ENCODE measurements at regions of chr20 and their contacts with region 1.

Region 1: GRCh38 chr20:44217342-44218092 is 6.9 kb upstream of the OSER1 start:
- DNase-seq: peak; percentile 65
- ATAC-seq: peak; percentile 82
- H3K4me3 ChIP-seq: no peak overlapping the region
- H3K27ac ChIP-seq: no peak overlapping the region
- H3K4me1 ChIP-seq: no peaks in the 10 kb centered on the region; a peak in 1 of 4 replicates
- H3K27me3 ChIP-seq: no peaks in the 10 kb centered on the region
- CTCF ChIP-seq: peak; percentile 93 to 99 (median 96)
- POLR2A ChIP-seq: no peak
- RAD21 ChIP-seq: peak; percentile 94

Region 2: DNA sequence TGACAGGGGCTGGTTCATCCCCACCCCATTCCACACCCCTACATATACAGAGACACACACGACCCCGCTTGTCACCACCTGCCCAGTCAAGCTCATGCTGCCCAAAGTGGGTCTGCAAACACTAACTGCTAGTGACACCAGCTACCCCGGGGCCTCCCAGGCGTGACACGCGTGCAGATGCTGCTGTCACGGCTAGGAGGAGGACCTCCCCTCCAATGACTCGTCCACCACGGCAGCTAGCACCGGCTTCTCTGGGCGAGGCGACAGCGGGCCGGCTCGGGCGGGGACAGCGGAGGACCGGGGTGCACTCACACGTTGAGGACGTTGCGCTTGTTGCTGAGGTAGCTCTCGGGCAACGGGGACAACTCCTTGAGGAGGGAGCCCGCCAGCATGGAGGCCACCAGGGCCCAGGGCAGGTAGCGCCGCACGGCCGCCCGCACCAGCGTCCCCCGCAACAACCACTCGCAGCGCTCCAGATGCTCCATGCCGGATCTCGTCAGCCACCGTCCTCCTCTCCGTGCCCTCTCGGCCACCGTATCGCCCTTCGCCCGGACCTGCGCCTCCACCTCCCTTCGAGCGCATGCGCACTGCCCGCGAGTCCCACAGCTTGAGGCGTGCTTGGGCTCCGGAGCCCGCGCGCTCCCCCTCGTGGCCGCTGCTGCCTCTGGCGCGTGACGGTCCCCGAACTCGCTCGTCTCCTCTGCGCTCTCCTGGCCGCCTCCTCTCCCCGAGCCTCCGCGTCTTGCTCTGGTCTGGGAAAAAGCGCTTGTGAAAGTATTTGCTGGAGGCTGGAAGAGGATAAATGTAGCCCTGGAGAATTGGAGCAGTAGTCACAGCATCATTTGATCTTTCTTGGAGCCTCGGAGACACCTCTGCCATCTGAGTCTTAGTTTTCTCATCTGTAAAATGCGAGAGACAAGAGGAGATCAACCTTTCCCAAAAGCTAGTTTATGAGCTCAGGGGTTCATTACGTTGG is 93.4 kb after region 1 on chr20 and contains the start of gene FITM2:
- CTCF ChIA-PET with region 1: interaction called, 61 read pairs
- POLR2A ChIA-PET with region 1: no interaction called
- RAD21 ChIA-PET with region 1: interaction called, 7 to 10 read pairs
- intact Hi-C with region 1: loop called (anchors 1 kb)
- DNase-seq: peak; percentile 93
- ATAC-seq: peak; percentile 98
- H3K4me3 ChIP-seq: peak within 1 kb of the TSS; percentile 93 to 98
- H3K27ac ChIP-seq: peak within 1 kb of the TSS; percentile 54; the same call in 1 of the 2 replicates
- H3K4me1 ChIP-seq: peaks cover 8 to 13% of the 10 kb centered on the region in 2 experiments; a peak in 3 of 4 replicates
- H3K27me3 ChIP-seq: no peaks in the 10 kb centered on the region
- CTCF ChIP-seq: peak; percentile 83 to 92 (median 91)
- POLR2A ChIP-seq: peak; percentile 46
- RAD21 ChIP-seq: peak; percentile 85
- total RNA-seq, gene FITM2: 5.2 TPM

Region 3: DNA sequence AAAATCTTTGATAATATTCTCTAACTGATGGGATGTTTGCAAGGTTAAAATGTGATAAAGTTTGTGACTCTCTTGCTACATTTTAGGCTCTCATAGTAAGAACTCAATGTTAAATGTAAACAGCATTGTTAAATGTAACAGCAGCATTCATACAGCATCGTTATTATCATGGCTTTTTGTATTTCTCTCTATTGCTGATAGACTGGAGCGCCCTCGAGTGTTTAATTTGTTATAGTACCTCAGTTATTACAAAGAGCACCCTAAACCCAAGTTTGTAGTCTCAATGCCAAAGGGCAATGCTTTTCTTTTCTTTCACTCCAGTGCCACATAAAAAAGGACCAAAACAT is 243.3 kb after region 1 on chr20:
- CTCF ChIA-PET with region 1: interaction called, 10 read pairs
- POLR2A ChIA-PET with region 1: no interaction called
- RAD21 ChIA-PET with region 1: interaction called in 1 of 2 experiments, 4 read pairs
- intact Hi-C with region 1: loop called (anchors 2 kb)
- DNase-seq: peak; percentile 31
- ATAC-seq: peak; percentile 89
- H3K4me3 ChIP-seq: no peak overlapping the region
- H3K27ac ChIP-seq: no peak overlapping the region
- H3K4me1 ChIP-seq: peaks cover 0 to 8% of the 10 kb centered on the region in 2 experiments; a peak in 1 of 4 replicates
- H3K27me3 ChIP-seq: no peaks in the 10 kb centered on the region
- CTCF ChIP-seq: peak; percentile 55 to 84 (median 65)
- POLR2A ChIP-seq: no peak
- RAD21 ChIP-seq: peak; percentile 87

Region 4: GRCh38 chr20:44609511-44610312 is 392.2 kb after region 1 on chr20:
- CTCF ChIA-PET with region 1: interaction called, 21 read pairs
- POLR2A ChIA-PET with region 1: no interaction called
- RAD21 ChIA-PET with region 1: interaction called in 1 of 2 experiments, 3 read pairs
- intact Hi-C with region 1: loop called (anchors 1 kb)
- DNase-seq: peak; percentile 76
- ATAC-seq: peak; percentile 98
- H3K4me3 ChIP-seq: peak overlapping the region in 1 of 2 experiments; percentile 27; a peak in 3 of 4 replicates
- H3K27ac ChIP-seq: peak overlapping the region; percentile 56
- H3K4me1 ChIP-seq: peaks cover 5 to 13% of the 10 kb centered on the region in 2 experiments
- H3K27me3 ChIP-seq: no peaks in the 10 kb centered on the region
- CTCF ChIP-seq: peak; percentile 93 to 99 (median 96)
- POLR2A ChIP-seq: peak; percentile 31
- RAD21 ChIP-seq: peak; percentile 98

Measured in HCT116 (cell line).